ENCODE measurements at regions of chr2 and their contacts with region 1.

Region 1: DNA sequence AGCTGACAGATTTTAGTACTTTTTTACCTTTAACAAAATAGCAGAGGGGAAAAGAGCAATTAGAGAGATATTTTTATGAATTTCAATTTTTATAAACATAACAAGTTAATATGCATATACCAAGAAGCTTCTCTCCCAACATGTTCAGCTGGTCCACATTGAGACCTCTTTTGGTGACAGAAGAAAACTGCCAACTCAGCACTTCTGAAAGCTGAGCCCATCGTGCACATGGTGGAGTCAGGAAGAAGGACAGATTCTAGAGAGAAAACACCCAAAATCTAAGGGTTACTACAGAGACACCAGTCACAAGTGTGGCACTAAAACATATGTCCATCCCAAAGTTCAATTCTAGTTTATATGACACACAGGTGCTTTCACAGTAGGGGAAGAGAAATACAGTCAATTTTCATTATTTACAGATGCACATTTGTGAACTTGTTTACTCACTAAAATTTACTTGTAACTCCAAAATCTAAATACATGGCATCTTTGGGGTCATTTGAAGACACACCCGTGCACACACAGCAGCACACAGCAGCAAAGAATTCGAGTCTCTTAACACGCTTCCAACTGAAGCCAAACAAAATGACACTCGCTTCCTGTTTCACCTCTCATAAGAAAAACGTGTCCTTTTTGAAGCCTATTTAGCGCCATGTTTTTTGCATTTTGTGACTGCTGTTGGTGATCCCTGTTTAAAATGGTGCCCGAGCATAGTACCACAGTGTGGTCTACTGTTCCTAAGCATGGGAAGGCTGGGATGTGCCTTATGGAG is 31.5 kb downstream of the STAT1 start:
- DNase-seq: no peak
- ATAC-seq: no peak
- H3K4me3 ChIP-seq: no peak overlapping the region
- H3K4me3 Mint-ChIP-seq: peak overlapping the region; percentile 26
- H3K27ac ChIP-seq: peak overlapping the region in 1 of 2 experiments; percentile 35
- H3K27ac Mint-ChIP-seq: peak overlapping the region; percentile 88
- H3K4me1 ChIP-seq: peaks cover 45% of the 10 kb centered on the region
- H3K4me1 Mint-ChIP-seq: peaks cover 63% of the 10 kb centered on the region
- H3K27me3 ChIP-seq: no peaks in the 10 kb centered on the region
- H3K27me3 Mint-ChIP-seq: no peaks in the 10 kb centered on the region
- CTCF ChIP-seq: no peak

Region 2: GRCh38 chr2:190961918-190962487 is 20.4 kb before region 1 on chr2:
- CTCF ChIA-PET with region 1: interaction called, 3 read pairs
- POLR2A ChIA-PET with region 1: no interaction called
- intact Hi-C with region 1: loop called in 1 of 2 experiments (anchors 2 kb)
- DNase-seq: no peak
- ATAC-seq: peak; percentile 20
- H3K4me3 ChIP-seq: no peak overlapping the region
- H3K4me3 Mint-ChIP-seq: no peak overlapping the region
- H3K27ac ChIP-seq: peak overlapping the region in 1 of 2 experiments; percentile 14
- H3K27ac Mint-ChIP-seq: peak overlapping the region; percentile 63
- H3K4me1 ChIP-seq: no peaks in the 10 kb centered on the region
- H3K4me1 Mint-ChIP-seq: peaks cover 39% of the 10 kb centered on the region
- H3K27me3 ChIP-seq: no peaks in the 10 kb centered on the region
- H3K27me3 Mint-ChIP-seq: no peaks in the 10 kb centered on the region
- CTCF ChIP-seq: no peak

Region 3: DNA sequence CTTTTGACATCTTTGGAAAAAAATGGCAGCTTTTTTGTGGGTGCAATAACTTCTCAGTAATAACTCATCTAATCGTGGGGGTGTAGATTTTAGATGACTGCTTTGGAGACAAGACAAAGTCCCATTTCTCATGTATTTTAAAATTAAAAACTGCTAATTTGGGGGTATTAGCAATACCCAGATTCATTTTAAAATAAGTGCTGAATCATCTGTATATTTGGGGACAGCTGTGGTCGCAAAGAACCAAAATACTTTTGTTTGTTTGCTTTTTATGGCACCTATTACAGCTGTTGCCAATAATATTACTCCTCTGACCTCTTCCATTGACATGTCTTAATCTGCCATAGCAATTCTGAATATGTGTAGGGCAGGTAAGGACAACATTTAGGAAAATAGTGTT is 13.9 kb before region 1 on chr2:
- CTCF ChIA-PET with region 1: interaction called, 3 read pairs
- POLR2A ChIA-PET with region 1: interaction called, 3 read pairs
- intact Hi-C with region 1: loop called in 1 of 2 experiments (anchors 2 kb)
- DNase-seq: no peak
- ATAC-seq: no peak
- H3K4me3 ChIP-seq: no peak overlapping the region
- H3K4me3 Mint-ChIP-seq: no peak overlapping the region
- H3K27ac ChIP-seq: no peak overlapping the region
- H3K27ac Mint-ChIP-seq: peak overlapping the region; percentile 82
- H3K4me1 ChIP-seq: no peaks in the 10 kb centered on the region
- H3K4me1 Mint-ChIP-seq: peaks cover 24% of the 10 kb centered on the region
- H3K27me3 ChIP-seq: no peaks in the 10 kb centered on the region
- H3K27me3 Mint-ChIP-seq: no peaks in the 10 kb centered on the region
- CTCF ChIP-seq: no peak